ENCODE measurements at regions of chr7 and their contacts with region 1.

Region 1: DNA sequence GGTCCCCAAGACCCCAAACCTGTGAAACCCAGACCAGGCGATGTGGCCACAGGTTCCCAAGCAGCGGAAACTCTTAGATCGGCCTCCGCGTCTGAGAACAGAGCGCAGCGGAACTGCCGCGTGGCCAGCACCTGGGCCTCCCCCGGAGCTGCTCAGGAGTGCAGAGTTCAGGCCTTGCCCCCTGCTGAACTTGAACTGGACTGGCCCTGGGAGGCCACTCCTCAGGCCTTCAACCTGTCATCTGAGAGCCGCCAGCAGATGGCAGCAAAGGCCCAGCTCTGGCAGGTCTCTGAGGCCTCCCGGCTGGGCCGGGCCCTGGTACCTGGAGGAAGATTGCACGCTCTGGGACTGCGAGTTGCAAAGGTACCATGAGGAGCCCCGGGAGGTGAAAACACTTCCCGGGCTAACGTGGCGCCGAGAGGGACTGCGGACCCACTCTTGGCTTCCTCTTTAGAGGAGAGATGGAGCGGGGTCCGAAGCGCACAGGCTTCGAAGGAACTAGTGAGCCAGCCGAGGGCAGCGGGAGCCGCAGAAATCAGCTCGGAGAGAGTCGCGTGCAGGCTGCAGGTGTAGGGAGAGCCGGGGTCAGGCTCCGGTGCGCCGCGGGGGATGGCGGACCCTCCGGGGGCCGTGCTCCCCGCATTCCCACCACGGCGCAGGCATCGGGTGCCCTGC is 89.1 kb downstream of the PAXIP1 start:
- DNase-seq: peak; percentile 96
- H3K4me3 ChIP-seq: peak overlapping the region in 1 of 2 experiments; percentile 6; a peak in 1 of 4 replicates
- H3K27ac ChIP-seq: no peak overlapping the region
- H3K4me1 ChIP-seq: no peaks in the 10 kb centered on the region
- H3K27me3 ChIP-seq: no peaks in the 10 kb centered on the region
- CTCF ChIP-seq: peak; percentile 80
- EP300 ChIP-seq: no peak
- RAD21 ChIP-seq: peak; percentile 88

Region 2: GRCh38 chr7:154698726-154699291 is 215.0 kb before region 1 on chr7:
- CTCF ChIA-PET with region 1: no interaction called
- POLR2A ChIA-PET with region 1: no interaction called
- DNase-seq: peak; percentile 45
- H3K4me3 ChIP-seq: no peak overlapping the region
- H3K27ac ChIP-seq: no peak overlapping the region
- H3K4me1 ChIP-seq: no peaks in the 10 kb centered on the region
- H3K27me3 ChIP-seq: no peaks in the 10 kb centered on the region
- CTCF ChIP-seq: 0 out of 2 replicates have a peak, but pooled peaks have one; percentile 20
- EP300 ChIP-seq: no peak
- RAD21 ChIP-seq: peak; percentile 46

Region 3: DNA sequence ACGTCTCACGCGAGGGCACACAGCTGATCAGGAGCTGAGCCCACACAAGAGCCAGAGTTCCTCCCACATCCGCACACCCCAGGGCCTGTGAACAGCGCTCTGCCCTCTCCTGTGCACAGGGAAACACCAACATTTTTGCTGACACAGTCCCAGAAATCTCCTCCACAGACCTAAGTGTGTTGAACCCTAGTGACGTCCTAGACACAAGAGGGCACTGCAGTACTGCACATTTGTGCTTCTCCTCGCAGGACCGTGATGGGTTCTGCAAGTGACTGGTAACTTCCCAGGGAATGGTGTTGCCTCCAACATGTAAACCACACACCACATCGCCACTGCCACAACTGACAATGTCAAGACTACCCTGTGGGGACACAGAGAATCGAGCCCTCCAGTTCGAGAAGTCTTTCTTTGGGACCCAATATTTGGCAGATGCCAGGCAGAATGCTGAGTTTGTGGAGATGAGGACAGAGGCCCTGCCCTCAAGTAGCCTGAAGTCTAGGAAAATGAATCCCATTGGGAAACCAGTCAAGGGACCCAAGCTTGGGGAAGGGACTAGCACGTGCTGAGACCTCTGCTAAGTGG is 81.1 kb before region 1 on chr7:
- CTCF ChIA-PET with region 1: interaction called, 69 read pairs
- POLR2A ChIA-PET with region 1: no interaction called
- DNase-seq: peak; percentile 81
- H3K4me3 ChIP-seq: no peak overlapping the region
- H3K27ac ChIP-seq: no peak overlapping the region
- H3K4me1 ChIP-seq: no peaks in the 10 kb centered on the region
- H3K27me3 ChIP-seq: no peaks in the 10 kb centered on the region
- CTCF ChIP-seq: no peak
- EP300 ChIP-seq: no peak
- RAD21 ChIP-seq: peak; percentile 95

Region 4: DNA sequence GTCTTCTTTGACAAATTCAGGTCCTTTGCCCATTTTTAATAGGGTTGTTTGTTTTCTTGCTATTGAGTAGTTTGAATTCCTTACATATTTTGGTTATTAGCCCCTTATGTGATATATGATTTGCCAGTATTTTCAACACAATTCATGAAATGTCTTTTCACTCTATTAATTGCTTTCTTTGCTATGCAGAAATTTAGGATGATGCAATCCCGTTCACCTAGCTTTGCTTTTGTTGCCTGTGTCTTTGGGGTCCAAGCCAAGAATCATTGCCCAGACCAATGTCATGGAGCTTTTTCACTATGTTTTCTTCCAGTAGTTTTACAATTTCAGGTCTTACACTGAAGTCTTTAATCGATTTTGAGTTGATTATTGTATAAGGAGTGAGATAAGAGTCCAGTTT is 65.3 kb before region 1 on chr7:
- CTCF ChIA-PET with region 1: interaction called, 29 read pairs
- POLR2A ChIA-PET with region 1: no interaction called
- DNase-seq: no peak
- H3K4me3 ChIP-seq: no peak overlapping the region
- H3K27ac ChIP-seq: no peak overlapping the region
- H3K4me1 ChIP-seq: peaks cover 0 to 4% of the 10 kb centered on the region in 2 experiments; a peak in 2 of 4 replicates
- H3K27me3 ChIP-seq: no peaks in the 10 kb centered on the region
- CTCF ChIP-seq: no peak
- EP300 ChIP-seq: no peak
- RAD21 ChIP-seq: no peak

Region 5: GRCh38 chr7:154892462-154892861 is 21.3 kb before region 1 on chr7:
- CTCF ChIA-PET with region 1: interaction called, 126 read pairs
- POLR2A ChIA-PET with region 1: no interaction called
- DNase-seq: no peak
- H3K4me3 ChIP-seq: no peak overlapping the region
- H3K27ac ChIP-seq: no peak overlapping the region
- H3K4me1 ChIP-seq: no peaks in the 10 kb centered on the region; a peak in 1 of 4 replicates
- H3K27me3 ChIP-seq: no peaks in the 10 kb centered on the region
- CTCF ChIP-seq: no peak
- EP300 ChIP-seq: no peak
- RAD21 ChIP-seq: no peak

Region 6: GRCh38 chr7:154947604-154948003 is 33.8 kb after region 1 on chr7:
- CTCF ChIA-PET with region 1: interaction called, 20 read pairs
- POLR2A ChIA-PET with region 1: no interaction called
- DNase-seq: no peak
- H3K4me3 ChIP-seq: no peak overlapping the region
- H3K27ac ChIP-seq: no peak overlapping the region
- H3K4me1 ChIP-seq: no peaks in the 10 kb centered on the region; a peak in 2 of 4 replicates
- H3K27me3 ChIP-seq: no peaks in the 10 kb centered on the region
- CTCF ChIP-seq: no peak
- EP300 ChIP-seq: no peak
- RAD21 ChIP-seq: no peak

Region 7: GRCh38 chr7:155298834-155299534 is 385.2 kb after region 1 on chr7:
- CTCF ChIA-PET with region 1: interaction called, 11 read pairs
- POLR2A ChIA-PET with region 1: no interaction called
- DNase-seq: peak; percentile 97
- H3K4me3 ChIP-seq: peak overlapping the region; percentile 79 to 99
- H3K27ac ChIP-seq: peak overlapping the region; percentile 34 to 89
- H3K4me1 ChIP-seq: peaks cover 12 to 36% of the 10 kb centered on the region in 2 experiments
- H3K27me3 ChIP-seq: no peaks in the 10 kb centered on the region
- CTCF ChIP-seq: no peak
- EP300 ChIP-seq: no peak
- RAD21 ChIP-seq: no peak

Measured in SK-N-SH (cell line).